A549 (cell line): ENCODE measurements at regions of chr17 and their contacts with region 1.

Region 1: DNA sequence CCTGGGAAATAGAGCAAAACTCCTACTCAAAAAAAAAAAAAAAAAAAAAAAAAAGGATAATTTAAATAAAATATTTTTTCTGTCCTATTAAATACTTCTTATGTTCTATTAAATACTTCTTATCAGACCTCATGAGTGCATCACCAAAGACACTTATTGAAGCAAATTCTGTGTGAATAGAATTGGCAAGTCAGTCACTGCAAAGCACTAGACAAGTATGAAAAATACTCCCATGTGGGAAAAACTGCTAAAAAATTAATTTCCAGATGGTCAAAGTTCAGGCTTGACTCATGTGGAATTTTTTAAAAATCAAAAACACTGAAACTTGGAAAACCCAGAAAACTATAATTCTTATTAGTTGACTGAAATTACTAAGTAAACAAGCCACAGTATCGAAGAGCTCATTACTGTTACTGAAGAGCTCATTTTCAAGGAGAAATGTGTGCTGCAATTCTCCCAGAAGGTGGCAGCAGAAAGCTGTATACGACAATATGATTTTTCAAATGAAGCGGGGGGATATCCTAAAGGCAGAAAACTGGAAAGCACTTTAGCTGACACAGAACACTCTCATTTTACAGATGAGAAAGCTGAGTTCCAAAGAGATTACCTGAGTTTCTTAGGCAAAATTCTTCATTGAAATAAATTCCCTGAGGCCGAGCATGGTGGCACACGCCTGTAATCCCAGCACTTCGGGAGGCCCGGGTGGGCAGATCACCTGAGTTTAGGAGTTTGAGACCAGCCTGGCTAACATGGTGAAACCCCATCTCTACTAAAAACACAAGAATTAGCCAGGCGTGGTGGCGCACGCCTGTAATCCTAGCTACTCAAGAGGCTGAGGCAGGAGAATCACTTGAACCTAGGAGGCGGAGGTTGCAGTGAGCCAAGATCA is 15.9 kb upstream of the FBXO47 start:
- DNase-seq: peak; percentile 79
- ATAC-seq: peak; percentile 86 to 88; a peak in 5 of 6 replicates
- H3K4me3 ChIP-seq: no peak overlapping the region
- H3K27ac ChIP-seq: no peak overlapping the region
- H3K4me1 ChIP-seq: no peaks in the 10 kb centered on the region
- CTCF ChIP-seq: peak; percentile 97
- EP300 ChIP-seq: no peak
- POLR2A ChIP-seq: no peak
- RAD21 ChIP-seq: peak; percentile 94 to 96

Region 2: DNA sequence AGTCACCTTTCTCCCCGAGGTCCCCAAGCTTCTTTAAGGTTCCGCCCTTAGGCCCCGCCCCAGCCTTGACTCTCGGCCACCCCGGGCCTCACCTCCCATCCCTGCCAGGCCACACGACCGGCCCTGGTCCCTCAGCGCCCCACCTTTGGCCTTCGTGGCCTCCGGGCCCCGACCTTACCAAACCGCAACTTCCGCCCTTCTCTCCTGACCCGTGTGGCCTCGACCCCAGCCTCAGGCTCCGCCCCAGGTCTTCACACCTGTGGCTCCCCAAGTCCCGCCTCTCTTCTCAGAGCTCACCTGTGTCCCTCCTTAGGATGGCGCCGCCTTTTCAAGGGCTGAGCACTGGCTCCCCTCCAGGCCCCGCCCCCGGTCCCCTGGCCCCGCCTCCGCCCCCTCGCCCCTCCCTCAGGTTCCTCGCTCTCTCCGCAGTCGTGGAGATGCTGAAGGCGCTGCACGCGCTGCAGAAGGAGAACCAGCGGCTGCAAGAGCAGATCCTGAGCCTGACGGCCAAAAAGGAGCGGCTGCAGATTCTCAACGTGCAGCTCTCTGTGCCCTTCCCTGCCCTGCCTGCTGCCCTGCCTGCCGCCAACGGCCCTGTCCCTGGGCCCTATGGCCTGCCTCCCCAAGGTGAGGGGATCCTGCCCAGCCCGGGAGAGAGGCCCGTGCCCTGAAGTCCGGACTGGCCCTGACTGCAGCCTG is 263.0 kb before region 1 on chr17:
- CTCF ChIA-PET with region 1: no interaction called
- POLR2A ChIA-PET with region 1: no interaction called
- DNase-seq: no peak
- ATAC-seq: no peak
- H3K4me3 ChIP-seq: no peak overlapping the region
- H3K27ac ChIP-seq: no peak overlapping the region
- H3K4me1 ChIP-seq: peaks cover 7% of the 10 kb centered on the region; the same call in 2 of the 3 replicates
- CTCF ChIP-seq: no peak
- EP300 ChIP-seq: no peak
- POLR2A ChIP-seq: no peak
- RAD21 ChIP-seq: no peak

Region 3: DNA sequence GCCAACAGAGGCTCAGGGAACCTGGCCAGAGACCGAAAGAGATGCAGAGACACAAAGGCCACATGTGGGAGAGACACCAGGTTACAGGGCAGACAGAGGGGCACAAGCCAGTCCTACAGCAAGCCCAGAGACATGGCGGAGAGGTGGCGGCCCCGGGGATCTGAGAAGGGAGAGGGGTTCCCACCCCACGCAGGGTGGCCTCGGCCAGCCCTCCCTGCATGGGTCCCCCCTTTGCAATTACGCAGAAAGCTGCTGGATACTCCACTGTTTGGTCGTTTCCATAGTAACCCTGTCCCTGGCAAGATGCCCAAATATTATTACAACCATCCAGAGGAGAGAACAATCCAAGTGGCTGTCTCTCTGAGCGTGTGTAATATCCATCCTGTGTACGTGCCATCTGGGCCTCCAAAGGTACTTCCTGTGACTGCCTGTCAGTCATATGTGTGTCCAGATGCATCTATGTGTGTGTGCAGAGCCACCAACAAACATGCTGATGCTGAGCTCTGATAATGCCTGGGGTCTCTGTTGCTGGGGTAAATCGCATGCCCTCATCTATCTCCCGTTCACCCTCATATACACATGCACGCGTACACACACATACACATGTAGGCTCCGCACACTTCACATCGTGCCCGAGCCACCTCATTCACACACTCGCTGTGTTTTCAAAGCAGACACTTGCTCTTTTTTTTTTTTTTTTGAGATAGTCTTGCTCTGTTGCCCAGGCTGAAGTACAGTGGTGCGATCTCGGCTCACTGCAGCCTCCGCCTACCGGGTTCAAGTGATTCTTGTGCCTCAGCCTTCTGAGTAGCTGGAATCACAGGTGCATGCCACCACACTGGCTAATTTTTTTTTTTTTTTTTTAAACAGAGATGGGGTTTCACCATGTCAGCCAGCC is 240.4 kb before region 1 on chr17:
- CTCF ChIA-PET with region 1: no interaction called
- POLR2A ChIA-PET with region 1: no interaction called
- DNase-seq: peak in 1 of 2 experiments; percentile 51
- ATAC-seq: peak in 1 of 2 experiments; percentile 11; a peak in 3 of 6 replicates
- H3K4me3 ChIP-seq: no peak overlapping the region
- H3K27ac ChIP-seq: no peak overlapping the region
- H3K4me1 ChIP-seq: peaks cover 36% of the 10 kb centered on the region
- CTCF ChIP-seq: no peak
- EP300 ChIP-seq: no peak
- POLR2A ChIP-seq: no peak
- RAD21 ChIP-seq: no peak

Region 4: DNA sequence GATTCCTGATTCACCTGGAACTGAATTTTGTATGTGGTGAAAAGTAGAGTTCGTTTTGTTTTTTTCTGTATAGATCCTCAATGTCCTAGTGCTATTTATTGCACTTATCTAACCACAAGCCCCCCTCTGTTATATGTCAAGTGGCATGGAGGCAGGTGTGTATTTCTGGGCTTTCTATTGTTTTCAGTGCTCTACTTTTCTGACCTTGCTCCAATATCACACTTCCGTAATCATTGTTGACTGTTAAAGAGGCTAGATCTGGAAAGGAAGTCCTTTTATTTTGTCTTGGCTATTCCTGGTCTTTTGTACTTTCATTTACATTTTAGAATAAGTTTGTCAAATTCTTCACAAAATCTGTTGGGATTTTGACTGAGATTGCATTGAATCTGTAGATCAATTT is 10.9 kb after region 1 on chr17:
- CTCF ChIA-PET with region 1: interaction called, 12 read pairs
- POLR2A ChIA-PET with region 1: no interaction called
- DNase-seq: no peak
- ATAC-seq: no peak
- H3K4me3 ChIP-seq: no peak overlapping the region
- H3K27ac ChIP-seq: no peak overlapping the region
- H3K4me1 ChIP-seq: no peaks in the 10 kb centered on the region
- CTCF ChIP-seq: no peak
- EP300 ChIP-seq: no peak
- POLR2A ChIP-seq: no peak
- RAD21 ChIP-seq: no peak

Region 5: GRCh38 chr17:39026980-39027451 is 43.9 kb after region 1 on chr17:
- CTCF ChIA-PET with region 1: interaction called, 10 read pairs
- POLR2A ChIA-PET with region 1: no interaction called
- DNase-seq: peak in 1 of 2 experiments; percentile 40
- ATAC-seq: peak; percentile 69 to 79; a peak in 5 of 6 replicates
- H3K4me3 ChIP-seq: peak overlapping the region; percentile 42
- H3K27ac ChIP-seq: peak overlapping the region in 1 of 2 experiments; percentile 52; a peak in 3 of 6 replicates
- H3K4me1 ChIP-seq: no peaks in the 10 kb centered on the region
- CTCF ChIP-seq: no peak
- EP300 ChIP-seq: no peak
- POLR2A ChIP-seq: no peak
- RAD21 ChIP-seq: no peak

Region 6: GRCh38 chr17:39144416-39144840 is 161.3 kb after region 1 on chr17:
- CTCF ChIA-PET with region 1: interaction called, 319 read pairs
- POLR2A ChIA-PET with region 1: interaction called, 5 read pairs
- DNase-seq: no peak
- ATAC-seq: peak; percentile 11 to 17; a peak in 1 of 6 replicates
- H3K4me3 ChIP-seq: no peak overlapping the region
- H3K27ac ChIP-seq: no peak overlapping the region
- H3K4me1 ChIP-seq: no peaks in the 10 kb centered on the region
- CTCF ChIP-seq: no peak
- EP300 ChIP-seq: no peak
- POLR2A ChIP-seq: no peak
- RAD21 ChIP-seq: no peak

Region 7: GRCh38 chr17:39235555-39236449 is 252.7 kb after region 1 on chr17:
- CTCF ChIA-PET with region 1: interaction called, 18 read pairs
- POLR2A ChIA-PET with region 1: no interaction called
- DNase-seq: peak; percentile 89 to 92
- ATAC-seq: peak; percentile 68 to 85
- H3K4me3 ChIP-seq: no peak overlapping the region
- H3K27ac ChIP-seq: peak overlapping the region; percentile 45 to 61; a peak in 3 of 6 replicates
- H3K4me1 ChIP-seq: peaks cover 48% of the 10 kb centered on the region
- CTCF ChIP-seq: peak; percentile 93
- EP300 ChIP-seq: no peak
- POLR2A ChIP-seq: no peak
- RAD21 ChIP-seq: peak; percentile 22 to 31; a peak in 1 of 5 replicates